ENCODE measurements at regions of chr4 and their contacts with region 1.

Region 1: DNA sequence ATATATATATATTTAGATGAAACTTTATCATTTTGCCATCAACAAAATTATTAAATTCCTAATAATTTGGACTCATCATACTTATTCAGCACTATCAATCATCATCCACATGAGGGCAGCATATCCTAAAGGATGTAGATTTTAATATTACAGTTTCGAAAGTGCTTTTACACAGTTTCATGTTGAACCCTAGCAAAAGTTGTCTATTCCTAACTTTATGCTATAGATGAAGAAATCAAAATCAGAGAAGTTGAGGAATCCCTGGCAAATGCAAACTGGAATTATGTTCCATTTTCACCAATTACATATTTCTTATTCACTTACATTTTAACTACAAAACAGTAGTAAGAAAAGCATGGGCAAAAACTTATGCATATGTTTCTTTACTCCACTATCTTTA is 36.6 kb upstream of the UGT2A1 start:
- DNase-seq: no peak
- H3K4me3 ChIP-seq: no peak overlapping the region
- CTCF ChIP-seq: peak; percentile 28

Region 2: GRCh38 chr4:69743476-69744156 is 54.0 kb after region 1 on chr4:
- CTCF ChIA-PET with region 1: no interaction called
- POLR2A ChIA-PET with region 1: no interaction called
- DNase-seq: no peak
- H3K4me3 ChIP-seq: no peak overlapping the region
- CTCF ChIP-seq: no peak

Region 3: DNA sequence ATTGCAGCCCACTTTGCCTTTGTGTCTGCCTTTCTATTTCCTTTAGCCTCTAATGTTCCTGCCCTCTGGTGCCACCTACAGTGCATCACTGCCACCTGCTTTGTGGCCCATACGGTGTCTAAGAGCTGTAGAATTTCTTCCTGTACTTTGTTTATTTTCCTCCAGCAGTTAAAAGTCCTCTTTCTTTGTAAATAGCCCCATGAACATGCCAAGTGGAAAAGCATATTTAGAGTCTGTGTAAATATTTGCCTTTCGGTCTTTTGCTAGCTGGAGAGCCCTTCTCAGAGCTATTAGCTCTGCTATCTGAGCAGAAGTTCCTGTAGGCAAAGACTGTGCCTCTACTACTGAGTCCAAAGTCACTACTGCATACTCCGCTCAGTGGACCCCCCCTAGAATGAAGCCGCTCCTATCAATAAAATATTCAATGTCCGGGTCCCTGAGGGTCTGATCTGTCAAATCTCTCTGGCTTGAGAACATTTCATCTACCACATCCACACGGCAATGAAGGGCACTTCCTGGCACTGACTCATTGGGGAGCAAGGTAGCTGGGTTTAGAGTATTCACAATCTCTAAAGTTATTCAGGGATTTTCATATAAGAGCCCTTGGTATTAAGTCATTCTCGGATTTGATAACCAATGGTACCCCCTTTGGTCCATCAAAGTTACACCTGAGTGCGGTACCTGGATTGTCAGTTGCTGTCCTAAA is 134.0 kb after region 1 on chr4:
- CTCF ChIA-PET with region 1: interaction called, 12 read pairs
- POLR2A ChIA-PET with region 1: no interaction called
- DNase-seq: no peak
- H3K4me3 ChIP-seq: no peak overlapping the region
- CTCF ChIP-seq: peak; percentile 59

Region 4: DNA sequence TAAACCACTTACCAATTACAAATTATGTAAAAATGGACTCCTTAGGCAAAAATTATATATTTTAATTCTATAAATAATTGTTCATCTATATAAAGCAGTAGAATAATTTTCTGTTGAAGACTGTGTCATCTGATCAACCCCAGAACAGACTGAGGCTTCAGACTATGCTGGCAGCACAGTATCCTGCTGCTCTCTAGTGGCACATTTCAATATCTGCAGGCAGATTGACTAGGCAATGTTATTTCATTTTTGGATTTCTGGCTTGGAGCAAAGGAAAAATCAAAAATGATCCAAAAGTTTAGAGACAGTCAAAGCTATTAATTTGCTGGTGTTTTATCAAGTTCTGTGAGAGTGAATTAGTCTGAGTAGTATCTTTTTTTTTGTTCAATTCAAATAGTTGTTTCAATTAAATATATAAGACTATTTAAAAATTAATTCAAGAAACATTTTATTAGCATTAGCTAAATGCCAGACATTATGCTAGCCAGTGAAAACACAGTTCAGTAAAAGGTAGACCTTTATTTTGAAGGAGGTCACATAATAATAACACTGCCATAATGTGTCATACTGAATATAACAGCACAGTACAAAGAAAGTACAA is 191.7 kb after region 1 on chr4:
- CTCF ChIA-PET with region 1: interaction called, 49 read pairs
- POLR2A ChIA-PET with region 1: no interaction called
- DNase-seq: no peak
- H3K4me3 ChIP-seq: no peak overlapping the region
- CTCF ChIP-seq: peak; percentile 72